HEK293 (cell line): ENCODE measurements at regions of chr3 and their contacts with region 1.

Region 1: GRCh38 chr3:47108546-47108945 is 55.4 kb downstream of the SETD2 start:
- H3K4me3 ChIP-seq: no peak overlapping the region
- H3K27ac ChIP-seq: no peak overlapping the region
- H3K4me1 ChIP-seq: no peaks in the 10 kb centered on the region
- CTCF ChIP-seq: no peak

Region 2: DNA sequence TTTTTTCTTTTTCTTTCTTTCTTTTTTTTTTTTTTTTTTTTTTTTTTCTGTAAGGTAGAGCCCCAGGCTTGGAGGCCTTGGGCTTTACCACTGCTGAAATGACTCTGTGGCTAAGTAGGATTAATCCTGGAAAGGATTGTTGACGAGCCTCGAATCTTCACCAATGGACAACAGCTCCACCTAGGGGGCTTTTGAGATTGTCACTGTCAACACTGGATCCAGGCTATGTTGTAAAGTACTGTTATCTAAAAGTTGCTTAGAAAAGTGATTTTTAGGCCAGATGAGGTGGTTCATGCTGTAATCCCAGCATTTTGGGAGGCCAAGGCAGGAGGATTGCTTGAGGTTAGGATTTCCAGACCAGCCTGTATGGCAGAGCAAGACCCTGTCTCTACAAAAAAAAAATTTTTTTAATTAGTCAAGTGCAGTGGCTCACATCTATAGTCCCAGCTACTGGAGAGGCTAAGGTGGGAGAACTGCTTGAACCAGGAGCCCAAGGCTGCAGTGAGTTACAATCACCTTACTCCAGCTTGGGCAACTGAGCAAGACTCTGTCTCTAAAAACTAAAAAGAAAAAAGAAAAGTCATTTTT is 215.8 kb after region 1 on chr3:
- CTCF ChIA-PET with region 1: no interaction called
- POLR2A ChIA-PET with region 1: interaction called, 10 read pairs
- H3K4me3 ChIP-seq: no peak overlapping the region
- H3K27ac ChIP-seq: no peak overlapping the region
- H3K4me1 ChIP-seq: no peaks in the 10 kb centered on the region
- CTCF ChIP-seq: peak; percentile 24; the same call in 1 of the 2 replicates